PC-3 (cell line): ENCODE measurements at regions of chr14 and their contacts with region 1.

Region 1: DNA sequence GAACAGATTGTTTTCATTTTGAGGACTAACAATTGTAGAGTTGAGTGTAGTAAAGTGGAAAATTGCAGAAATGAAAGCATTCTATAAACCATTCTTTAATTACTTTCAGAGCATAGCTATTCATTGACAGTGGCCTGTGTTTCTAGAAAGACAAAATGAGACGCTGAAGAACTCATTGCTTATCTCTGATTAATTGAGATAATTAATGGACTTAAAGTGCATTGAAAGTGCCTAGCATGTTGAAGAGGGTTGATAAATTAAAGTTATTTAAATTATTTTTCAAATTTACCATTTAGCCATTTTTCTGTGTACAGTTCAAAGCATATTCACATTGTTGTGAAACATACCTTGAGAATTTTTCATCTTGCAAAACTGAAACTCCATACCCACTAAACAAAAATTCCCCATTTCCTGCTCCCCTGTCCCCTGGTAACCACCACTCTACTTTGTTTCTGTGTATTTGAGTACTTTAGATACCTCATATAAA is 57.4 kb downstream of the DAAM1 start:
- DNase-seq: no peak
- ATAC-seq: no peak
- H3K4me3 ChIP-seq: no peak overlapping the region
- H3K27ac ChIP-seq: peak overlapping the region; percentile 24
- H3K4me1 ChIP-seq: peaks cover 46% of the 10 kb centered on the region
- H3K27me3 ChIP-seq: no peaks in the 10 kb centered on the region
- CTCF ChIP-seq: no peak

Region 2: GRCh38 chr14:59075506-59075905 is 170.3 kb before region 1 on chr14:
- CTCF ChIA-PET with region 1: no interaction called
- POLR2A ChIA-PET with region 1: no interaction called
- intact Hi-C with region 1: no loop called
- DNase-seq: no peak
- ATAC-seq: no peak
- H3K4me3 ChIP-seq: no peak overlapping the region
- H3K27ac ChIP-seq: no peak overlapping the region
- H3K4me1 ChIP-seq: no peaks in the 10 kb centered on the region
- H3K27me3 ChIP-seq: peaks cover 83% of the 10 kb centered on the region
- CTCF ChIP-seq: no peak

Region 3: GRCh38 chr14:59275653-59276052 is 29.8 kb after region 1 on chr14:
- CTCF ChIA-PET with region 1: no interaction called
- POLR2A ChIA-PET with region 1: no interaction called
- intact Hi-C with region 1: loop called (anchors 2 kb)
- DNase-seq: peak; percentile 100
- ATAC-seq: peak; percentile 75
- H3K4me3 ChIP-seq: peak overlapping the region; percentile 23
- H3K27ac ChIP-seq: peak overlapping the region; percentile 64
- H3K4me1 ChIP-seq: peaks cover 60% of the 10 kb centered on the region
- H3K27me3 ChIP-seq: no peaks in the 10 kb centered on the region
- CTCF ChIP-seq: no peak

Region 4: DNA sequence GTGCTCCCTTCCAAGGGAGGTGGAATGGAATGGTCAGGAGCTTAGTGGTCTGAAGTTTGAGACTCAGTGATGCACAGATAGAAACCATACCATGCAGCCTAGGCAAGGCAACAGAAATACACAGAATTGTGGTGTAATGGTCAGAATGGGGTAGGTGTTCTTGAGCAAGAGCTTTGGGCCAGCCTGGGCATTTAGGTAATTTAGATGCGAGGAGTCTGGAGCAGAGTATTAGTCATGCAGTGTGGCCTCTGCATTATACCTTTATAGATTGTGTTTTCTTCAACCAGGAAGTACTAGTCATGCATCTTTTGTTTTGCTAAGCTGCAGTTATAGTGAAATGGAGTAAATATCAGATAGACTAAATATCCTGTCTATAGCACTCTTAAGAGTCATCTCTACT is 60.9 kb after region 1 on chr14:
- CTCF ChIA-PET with region 1: no interaction called
- POLR2A ChIA-PET with region 1: no interaction called
- intact Hi-C with region 1: loop called (anchors 5 kb)
- DNase-seq: peak; percentile 99
- ATAC-seq: peak; percentile 91
- H3K4me3 ChIP-seq: peak overlapping the region; percentile 3; the same call in 1 of the 2 replicates
- H3K27ac ChIP-seq: peak overlapping the region; percentile 39
- H3K4me1 ChIP-seq: peaks cover 49% of the 10 kb centered on the region
- H3K27me3 ChIP-seq: no peaks in the 10 kb centered on the region
- CTCF ChIP-seq: no peak

Region 5: DNA sequence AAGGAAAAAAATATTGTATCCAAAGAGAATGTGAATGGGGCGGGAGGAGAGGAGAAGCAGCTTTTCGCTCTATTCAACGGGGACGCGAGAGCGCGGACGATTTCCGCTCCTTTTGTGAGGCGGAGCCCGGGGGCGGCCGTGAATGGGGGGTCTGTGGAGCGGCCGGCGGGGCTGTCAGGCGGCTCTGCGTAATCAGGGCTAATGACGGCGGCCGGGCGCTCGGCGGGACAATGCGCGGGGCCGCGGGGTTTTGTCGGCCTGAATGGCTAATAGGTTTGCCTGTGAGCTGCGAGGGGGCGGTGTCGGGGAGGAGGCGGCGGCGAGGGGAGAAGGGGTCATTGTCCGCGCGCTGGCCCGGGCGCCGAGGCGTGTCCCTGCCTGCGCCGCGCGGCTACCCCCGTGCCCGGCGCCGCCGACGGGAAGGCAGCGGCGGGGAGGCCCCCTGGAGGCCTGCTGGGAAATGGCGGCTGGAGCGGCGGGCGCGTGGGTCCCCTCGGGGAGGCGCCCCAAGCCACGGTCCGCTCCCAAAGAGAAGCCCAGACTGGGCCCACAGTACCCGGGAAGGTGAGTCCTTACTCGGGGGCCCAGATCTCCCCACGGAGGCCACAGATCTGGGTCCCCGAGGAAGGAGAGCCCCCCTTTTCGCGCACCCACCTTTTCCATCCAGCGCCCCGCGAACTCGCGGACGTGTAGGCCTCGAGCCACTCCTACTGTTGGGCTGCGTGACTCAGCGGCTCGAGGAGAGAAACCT is 1269.1 kb after region 1 on chr14:
- CTCF ChIA-PET with region 1: interaction called, 10 read pairs
- POLR2A ChIA-PET with region 1: no interaction called
- intact Hi-C with region 1: no loop called
- DNase-seq: peak; percentile 22
- ATAC-seq: peak; percentile 79
- H3K4me3 ChIP-seq: peak overlapping the region; percentile 64
- H3K27ac ChIP-seq: no peak overlapping the region
- H3K4me1 ChIP-seq: no peaks in the 10 kb centered on the region
- H3K27me3 ChIP-seq: peaks cover 49% of the 10 kb centered on the region
- CTCF ChIP-seq: peak; percentile 14; the same call in 1 of the 2 replicates